CD8-positive, alpha-beta memory T cell (primary cell): ENCODE measurements at regions of chr4 and their contacts with region 1.

Region 1: DNA sequence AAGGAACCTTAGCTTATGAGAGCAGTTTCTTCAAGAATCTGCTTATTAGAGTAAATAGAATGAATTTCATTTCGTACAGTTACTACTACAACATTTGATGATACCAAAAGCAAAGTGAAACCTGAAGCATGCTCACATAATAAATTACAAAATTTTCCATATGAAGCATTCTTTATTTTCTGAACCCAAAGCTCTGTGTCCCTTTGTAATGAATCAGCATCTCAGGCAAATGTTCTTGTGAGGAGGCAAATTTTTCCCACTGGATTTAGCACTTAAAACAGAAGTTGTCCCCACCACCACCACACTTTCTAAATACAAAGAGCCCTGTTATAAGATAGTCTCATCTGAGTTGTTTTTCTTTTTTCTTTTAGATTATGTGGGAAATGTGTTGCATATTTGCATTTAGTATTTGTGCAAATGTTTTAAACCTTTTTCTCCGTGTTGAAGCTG is 70.7 kb upstream of the NFKB1 start:
- DNase-seq: no peak
- H3K4me3 ChIP-seq: peak overlapping the region; percentile 83
- H3K4me3 Mint-ChIP-seq: peak overlapping the region; percentile 83 to 97 (median 92)
- H3K27ac ChIP-seq: peak overlapping the region; percentile 62
- H3K27ac Mint-ChIP-seq: peak overlapping the region; percentile 65 to 98 (median 90)
- H3K4me1 ChIP-seq: peaks cover 5% of the 10 kb centered on the region
- H3K4me1 Mint-ChIP-seq: peaks cover 6 to 8% (median 6%) of the 10 kb centered on the region in 3 donors
- H3K27me3 ChIP-seq: no peaks in the 10 kb centered on the region
- H3K27me3 Mint-ChIP-seq: no peaks in the 10 kb centered on the region

Region 2: DNA sequence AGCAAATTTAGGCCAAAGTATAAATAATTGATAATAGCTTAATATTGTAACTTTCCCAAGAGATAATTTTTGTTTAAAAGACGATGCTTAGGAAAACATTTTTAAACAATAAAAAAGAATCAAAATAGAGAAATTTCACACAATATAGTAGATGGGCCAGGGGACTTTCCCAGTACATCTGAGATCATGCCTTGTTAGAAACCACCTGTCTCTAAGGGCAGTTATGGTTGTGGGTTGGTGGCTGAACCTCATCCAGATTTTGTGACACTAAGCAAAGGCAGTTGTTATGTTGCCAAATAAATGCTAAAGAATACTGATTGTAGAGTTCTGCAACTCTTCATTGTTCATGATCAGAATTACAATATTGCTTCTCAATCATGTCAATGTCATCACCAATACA is 369.4 kb before region 1 on chr4:
- CTCF ChIA-PET with region 1: no interaction called
- POLR2A ChIA-PET with region 1: no interaction called
- DNase-seq: no peak
- H3K4me3 ChIP-seq: no peak overlapping the region
- H3K4me3 Mint-ChIP-seq: no peak overlapping the region
- H3K27ac ChIP-seq: no peak overlapping the region
- H3K27ac Mint-ChIP-seq: no peak overlapping the region
- H3K4me1 ChIP-seq: no peaks in the 10 kb centered on the region
- H3K4me1 Mint-ChIP-seq: no peaks in the 10 kb centered on the region
- H3K27me3 ChIP-seq: no peaks in the 10 kb centered on the region
- H3K27me3 Mint-ChIP-seq: peaks cover 3 to 4% of the 10 kb centered on the region in 2 donors

Region 3: DNA sequence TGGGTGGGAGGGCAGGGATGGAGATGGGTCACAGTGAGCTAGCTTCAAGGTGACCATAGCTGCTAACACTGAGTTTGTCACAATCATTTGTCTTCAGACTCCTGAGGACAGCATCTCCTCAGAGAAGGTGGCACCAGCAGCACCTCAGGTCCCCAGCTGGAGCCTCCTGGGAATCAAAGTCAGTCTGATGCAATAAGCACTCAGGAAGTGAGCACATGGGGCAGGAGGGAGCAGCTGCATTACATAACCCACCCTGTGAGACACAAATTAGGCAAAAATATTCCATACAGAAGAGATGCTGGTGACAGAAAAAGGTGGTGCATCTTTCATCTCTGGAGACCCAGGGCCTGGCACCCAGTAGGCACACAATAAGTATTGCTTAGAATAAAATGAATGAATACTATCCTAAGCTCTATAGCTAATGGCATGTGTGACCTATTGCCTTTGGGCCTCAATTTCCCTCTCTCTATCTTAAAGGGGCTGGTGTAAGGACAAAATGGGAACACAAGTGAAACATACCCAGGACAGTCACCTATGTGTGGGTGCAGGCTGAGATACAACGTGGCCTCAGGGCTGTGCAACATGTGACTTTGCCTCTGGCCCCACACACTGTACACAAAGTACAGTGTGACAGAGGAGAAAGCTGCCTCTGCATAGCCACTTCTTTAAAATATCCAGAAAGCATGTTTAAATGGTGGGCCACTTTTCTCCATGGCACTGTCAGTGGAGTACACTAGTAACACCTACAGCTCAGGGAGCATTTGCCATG is 122.3 kb before region 1 on chr4:
- CTCF ChIA-PET with region 1: no interaction called
- POLR2A ChIA-PET with region 1: no interaction called
- DNase-seq: no peak
- H3K4me3 ChIP-seq: no peak overlapping the region
- H3K4me3 Mint-ChIP-seq: no peak overlapping the region
- H3K27ac ChIP-seq: no peak overlapping the region
- H3K27ac Mint-ChIP-seq: peak overlapping the region in 2 of 8 donors; percentile 38 to 75
- H3K4me1 ChIP-seq: no peaks in the 10 kb centered on the region
- H3K4me1 Mint-ChIP-seq: peaks cover 5 to 14% (median 14%) of the 10 kb centered on the region in 3 donors
- H3K27me3 ChIP-seq: no peaks in the 10 kb centered on the region
- H3K27me3 Mint-ChIP-seq: no peaks in the 10 kb centered on the region

Region 4: GRCh38 chr4:102352781-102353180 is 77.7 kb before region 1 on chr4:
- CTCF ChIA-PET with region 1: no interaction called
- POLR2A ChIA-PET with region 1: no interaction called
- DNase-seq: no peak
- H3K4me3 ChIP-seq: no peak overlapping the region
- H3K4me3 Mint-ChIP-seq: no peak overlapping the region
- H3K27ac ChIP-seq: no peak overlapping the region
- H3K27ac Mint-ChIP-seq: no peak overlapping the region
- H3K4me1 ChIP-seq: no peaks in the 10 kb centered on the region
- H3K4me1 Mint-ChIP-seq: peaks cover 0 to under 1% (median 0%) of the 10 kb centered on the region in 3 donors
- H3K27me3 ChIP-seq: no peaks in the 10 kb centered on the region
- H3K27me3 Mint-ChIP-seq: peaks cover under 1 to 13% of the 10 kb centered on the region in 2 donors

Region 5: GRCh38 chr4:102477657-102478056 is 47.2 kb after region 1 on chr4:
- CTCF ChIA-PET with region 1: no interaction called
- POLR2A ChIA-PET with region 1: no interaction called
- DNase-seq: no peak
- H3K4me3 ChIP-seq: no peak overlapping the region
- H3K4me3 Mint-ChIP-seq: no peak overlapping the region
- H3K27ac ChIP-seq: no peak overlapping the region
- H3K27ac Mint-ChIP-seq: no peak overlapping the region
- H3K4me1 ChIP-seq: no peaks in the 10 kb centered on the region
- H3K4me1 Mint-ChIP-seq: no peaks in the 10 kb centered on the region
- H3K27me3 ChIP-seq: no peaks in the 10 kb centered on the region
- H3K27me3 Mint-ChIP-seq: peaks cover 3 to 8% of the 10 kb centered on the region in 2 donors

Region 6: DNA sequence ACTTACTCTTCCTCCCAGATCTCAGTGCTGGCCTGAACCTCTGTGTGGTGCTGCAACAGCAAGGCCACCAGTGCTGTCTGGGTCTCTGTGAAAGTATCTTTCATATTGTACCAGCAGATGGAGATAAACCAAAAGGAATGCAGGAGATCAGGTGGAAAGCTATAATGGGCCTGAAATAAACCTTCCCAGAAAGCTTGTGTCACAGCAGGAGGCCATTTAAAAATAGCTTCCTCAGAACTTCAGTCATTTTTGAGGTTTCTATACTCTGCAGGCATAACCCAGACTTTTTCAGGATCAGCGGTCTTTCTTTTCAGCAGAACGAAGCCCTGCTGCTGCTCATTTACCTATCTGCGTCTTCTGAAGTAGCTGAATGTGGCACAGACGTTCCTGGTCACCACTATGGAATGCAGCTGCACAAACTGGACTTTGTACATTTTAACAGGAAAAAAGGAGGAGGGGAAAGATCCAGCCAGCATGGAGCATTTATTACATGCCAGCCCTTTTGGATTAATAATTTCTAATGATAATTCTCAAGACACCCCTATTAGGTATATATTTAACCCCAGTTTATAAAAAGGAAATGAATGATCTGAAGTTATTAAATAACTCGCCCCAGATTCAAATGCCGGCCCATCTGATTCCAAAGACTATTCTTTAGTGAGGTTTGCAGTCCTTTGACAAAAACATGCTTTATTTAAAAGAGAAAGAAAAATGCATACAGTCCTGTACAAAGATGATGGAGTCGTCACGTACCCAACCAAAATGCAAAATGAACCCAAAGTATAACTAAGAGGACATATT is 190.4 kb after region 1 on chr4:
- CTCF ChIA-PET with region 1: interaction called, 4 read pairs
- POLR2A ChIA-PET with region 1: interaction called, 14 read pairs
- DNase-seq: no peak
- H3K4me3 ChIP-seq: no peak overlapping the region
- H3K4me3 Mint-ChIP-seq: no peak overlapping the region
- H3K27ac ChIP-seq: no peak overlapping the region
- H3K27ac Mint-ChIP-seq: peak overlapping the region in 5 of 8 donors; percentile 40 to 78 (median 70)
- H3K4me1 ChIP-seq: peaks cover 10% of the 10 kb centered on the region
- H3K4me1 Mint-ChIP-seq: peaks cover 11 to 46% (median 32%) of the 10 kb centered on the region in 3 donors
- H3K27me3 ChIP-seq: no peaks in the 10 kb centered on the region
- H3K27me3 Mint-ChIP-seq: no peaks in the 10 kb centered on the region

Region 7: DNA sequence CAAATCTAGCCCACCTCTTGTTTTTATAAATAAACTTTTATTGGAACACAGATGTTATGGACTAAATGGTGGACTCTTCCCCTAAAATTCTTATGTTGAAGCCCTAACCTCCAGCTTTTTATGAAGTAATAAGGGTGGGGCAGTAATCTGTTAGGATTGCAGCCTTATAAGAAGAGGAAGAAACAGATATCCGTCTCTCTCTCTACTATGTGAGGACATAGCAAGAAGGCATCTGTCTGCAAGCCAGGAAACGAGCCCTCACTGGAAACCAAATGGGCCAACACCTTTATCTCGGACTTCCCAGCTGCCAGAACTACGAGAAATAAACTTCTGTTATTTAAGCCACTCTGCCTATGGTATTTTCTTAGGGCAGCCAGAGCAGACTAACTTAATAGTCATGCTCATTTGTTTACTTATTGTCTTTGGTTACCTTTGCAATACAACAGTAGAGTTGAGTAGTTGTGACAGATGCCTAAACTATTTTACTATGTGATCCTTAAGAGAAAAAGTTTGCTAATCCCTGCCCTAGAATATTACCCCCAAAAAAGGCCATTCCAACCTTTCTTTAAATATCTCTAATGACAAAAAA is 262.9 kb after region 1 on chr4:
- CTCF ChIA-PET with region 1: no interaction called
- POLR2A ChIA-PET with region 1: interaction called, 10 read pairs
- DNase-seq: no peak
- H3K4me3 ChIP-seq: no peak overlapping the region
- H3K4me3 Mint-ChIP-seq: no peak overlapping the region
- H3K27ac ChIP-seq: no peak overlapping the region
- H3K27ac Mint-ChIP-seq: peak overlapping the region in 1 of 8 donors; percentile 81
- H3K4me1 ChIP-seq: no peaks in the 10 kb centered on the region
- H3K4me1 Mint-ChIP-seq: no peaks in the 10 kb centered on the region
- H3K27me3 ChIP-seq: no peaks in the 10 kb centered on the region
- H3K27me3 Mint-ChIP-seq: peaks cover 0 to 2% of the 10 kb centered on the region in 2 donors